Sigmoid colon (tissue), 7 donors: ENCODE measurements at regions of chr1 and their contacts with region 1.

Region 1: GRCh38 chr1:38990738-38991639 is at the start of gene AKIRIN1:
- DNase-seq: peak; percentile 99
- H3K4me3 ChIP-seq: peak within 1 kb of the TSS; percentile 59 to 100 (median 98)
- H3K27ac ChIP-seq: peak within 1 kb of the TSS; percentile 97 to 100 (median 98)
- H3K4me1 ChIP-seq: peaks cover 0 to 33% (median 27%) of the 10 kb centered on the region in 4 donors
- H3K27me3 ChIP-seq: no peaks in the 10 kb centered on the region
- CTCF ChIP-seq: peak in 1 of 4 experiments; percentile 21
- EP300 ChIP-seq: no peak
- POLR2A ChIP-seq: peak; percentile 86 to 91
- total RNA-seq, gene AKIRIN1: 42.7 to 55.7 (median 51.6) TPM

Region 2: DNA sequence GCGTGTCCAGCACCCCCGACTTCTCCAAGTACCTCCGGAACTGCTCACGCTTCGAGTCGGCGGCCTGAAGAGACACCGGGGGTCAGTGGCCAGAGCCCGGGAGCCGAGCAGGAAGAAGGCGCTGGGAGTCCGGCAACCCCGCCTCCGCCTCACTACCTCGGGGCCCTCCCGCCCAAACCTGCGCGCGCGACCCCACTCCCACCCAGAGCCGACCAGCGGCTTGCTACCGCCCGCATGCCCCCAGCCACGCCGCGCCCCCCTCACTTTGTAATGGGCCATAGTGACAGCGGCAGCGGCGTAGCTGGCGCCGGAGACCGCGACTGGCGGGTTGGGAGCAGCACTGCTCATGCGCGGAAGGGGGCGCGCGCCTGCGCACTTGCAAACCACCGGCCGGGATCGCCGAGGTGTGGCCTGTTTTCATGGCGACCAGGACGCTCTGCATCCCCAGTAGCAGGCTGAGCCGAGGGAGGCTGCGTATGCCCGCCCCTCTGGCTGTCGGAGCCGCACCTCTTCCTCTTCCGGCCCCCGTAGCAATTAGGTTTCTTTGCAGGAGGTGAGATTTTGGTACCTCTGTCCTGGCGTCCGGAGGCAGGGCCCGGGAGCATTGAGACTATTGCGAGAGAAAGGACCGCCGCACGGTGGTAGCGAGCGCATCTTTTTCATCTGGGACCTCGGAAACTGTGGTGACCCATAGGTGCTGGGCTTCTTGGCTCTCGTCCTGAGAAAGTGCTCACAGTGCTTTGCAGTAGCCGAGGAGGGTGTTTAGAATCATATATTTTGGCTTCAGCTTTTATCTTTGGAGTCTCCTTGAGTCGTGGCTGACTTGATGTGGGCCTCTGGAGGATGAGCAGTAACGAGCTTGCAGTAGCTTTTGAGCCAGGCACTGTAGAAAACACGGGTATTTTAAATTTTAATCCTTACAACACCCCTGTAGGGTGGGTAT is 117.7 kb before region 1 on chr1 and contains the start of gene MYCBP:
- intact Hi-C with region 1: loop called (anchors 1 kb)
- DNase-seq: peak; percentile 97
- H3K4me3 ChIP-seq: peak within 1 kb of the TSS; percentile 56 to 92 (median 79)
- H3K27ac ChIP-seq: peak within 1 kb of the TSS; percentile 71 to 80 (median 79)
- H3K4me1 ChIP-seq: peaks cover 0 to 24% (median 14%) of the 10 kb centered on the region in 4 donors
- H3K27me3 ChIP-seq: no peaks in the 10 kb centered on the region
- CTCF ChIP-seq: peak in 1 of 4 experiments; percentile 13
- EP300 ChIP-seq: no peak
- POLR2A ChIP-seq: no peak
- total RNA-seq, gene MYCBP: 13.0 to 18.9 (median 15.5) TPM

Region 3: DNA sequence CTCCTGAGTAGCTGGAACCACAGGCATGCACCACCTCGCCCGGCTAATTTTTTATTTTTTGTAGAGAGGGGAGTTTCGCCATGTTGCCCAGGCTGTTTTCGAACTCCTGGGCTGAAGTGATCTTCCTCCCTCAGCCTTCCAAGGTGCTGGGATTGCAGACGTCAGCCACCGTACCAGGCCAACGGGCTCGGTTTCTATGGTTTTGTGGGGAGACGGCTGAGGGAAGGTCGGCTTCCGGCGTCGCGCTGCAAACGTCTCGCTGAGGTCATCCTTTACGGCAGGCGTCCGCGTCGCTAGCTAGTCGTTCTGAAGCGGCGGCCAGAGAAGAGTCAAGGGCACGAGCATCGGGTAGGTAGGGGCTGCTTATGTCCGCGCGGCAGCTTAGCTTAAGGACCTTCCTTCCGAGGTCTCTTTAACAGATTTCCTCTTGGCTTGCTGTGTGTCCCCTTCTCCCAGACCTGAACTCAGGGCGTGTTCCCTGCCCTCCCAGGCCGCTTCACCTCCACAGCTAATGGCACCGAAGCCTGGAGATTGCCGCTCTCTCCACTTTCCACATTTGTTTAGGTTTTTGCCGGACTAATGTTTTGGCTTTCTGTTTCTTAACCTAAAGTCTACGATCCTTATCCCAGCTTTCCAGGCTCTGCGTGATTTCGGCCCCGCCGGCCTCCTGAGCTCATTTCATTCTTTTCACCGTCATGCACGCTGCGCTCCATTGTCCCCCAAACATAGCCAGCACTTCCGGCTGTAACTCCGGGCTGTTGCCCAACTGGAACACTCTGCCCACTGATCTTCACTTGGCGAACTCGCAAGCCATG is 35.3 kb after region 1 on chr1 and contains the start of gene NDUFS5:
- intact Hi-C with region 1: loop called (anchors 1 kb)
- DNase-seq: peak; percentile 97
- H3K4me3 ChIP-seq: peak within 1 kb of the TSS; percentile 54 to 74 (median 69)
- H3K27ac ChIP-seq: peak within 1 kb of the TSS; percentile 89 to 96 (median 94)
- H3K4me1 ChIP-seq: peaks cover 0 to 38% (median 15%) of the 10 kb centered on the region in 4 donors
- H3K27me3 ChIP-seq: no peaks in the 10 kb centered on the region
- CTCF ChIP-seq: no peak
- EP300 ChIP-seq: peak in 1 of 4 donors; percentile 63
- POLR2A ChIP-seq: peak; percentile 94 to 96
- total RNA-seq, gene NDUFS5: 525 to 1,407 (median 722) TPM